Aorta (tissue), 5 donors: ENCODE measurements at regions of chr18 and their contacts with region 1.

Region 1: DNA sequence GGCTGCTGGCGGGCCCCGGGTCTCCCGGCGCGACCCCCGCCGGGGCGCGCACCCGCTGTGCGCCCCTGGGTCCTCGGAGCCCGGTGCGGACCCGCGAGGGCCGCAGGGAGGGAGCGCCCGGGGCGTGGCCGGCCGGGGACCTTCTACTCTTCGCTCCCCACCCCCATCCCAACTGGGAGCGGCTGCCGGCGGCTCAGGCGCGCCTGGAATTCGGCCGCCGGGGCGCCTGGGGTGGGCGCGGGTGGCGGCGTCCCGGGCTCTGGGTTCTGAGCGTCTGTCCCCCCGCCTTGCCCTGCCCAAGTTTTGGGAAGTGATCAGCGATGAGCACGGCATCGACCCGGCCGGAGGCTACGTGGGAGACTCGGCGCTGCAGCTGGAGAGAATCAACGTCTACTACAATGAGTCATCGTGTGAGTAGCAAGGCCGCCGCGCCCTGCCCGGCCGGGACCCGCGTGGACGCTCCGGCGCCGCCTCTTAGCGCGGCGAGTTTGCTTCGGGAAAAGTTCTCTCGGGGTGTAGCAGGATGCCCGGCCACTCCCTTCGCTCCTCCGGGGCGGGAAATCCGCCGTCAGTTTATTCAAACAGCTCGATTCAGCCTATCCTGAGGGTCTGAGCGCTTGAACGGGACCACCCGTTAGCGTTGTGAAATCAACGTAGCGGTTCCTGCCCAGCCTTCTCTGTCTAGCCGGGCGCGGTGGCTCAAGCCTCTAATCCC is 502 bp downstream of the TUBB6 start:
- DNase-seq: peak; percentile 93 to 96
- ATAC-seq: peak; percentile 91
- H3K4me3 ChIP-seq: peak overlapping the region; percentile 78 to 91
- H3K27ac ChIP-seq: peak overlapping the region; percentile 95 to 100
- H3K4me1 ChIP-seq: peaks cover 0 to 8% of the 10 kb centered on the region in 2 donors
- H3K27me3 ChIP-seq: no peaks in the 10 kb centered on the region

Region 2: GRCh38 chr18:12162786-12163185 is 145.8 kb before region 1 on chr18:
- intact Hi-C with region 1: no loop called
- DNase-seq: no peak
- ATAC-seq: no peak
- H3K4me3 ChIP-seq: no peak overlapping the region
- H3K27ac ChIP-seq: no peak overlapping the region
- H3K4me1 ChIP-seq: no peaks in the 10 kb centered on the region
- H3K27me3 ChIP-seq: no peaks in the 10 kb centered on the region

Region 3: GRCh38 chr18:12236934-12237832 is 71.4 kb before region 1 on chr18:
- intact Hi-C with region 1: loop called in 1 of 2 experiments (anchors 5 kb)
- DNase-seq: peak; percentile 86 to 92
- ATAC-seq: peak; percentile 85
- H3K4me3 ChIP-seq: no peak overlapping the region
- H3K27ac ChIP-seq: no peak overlapping the region
- H3K4me1 ChIP-seq: peaks cover 0 to 2% of the 10 kb centered on the region in 2 donors
- H3K27me3 ChIP-seq: no peaks in the 10 kb centered on the region

Region 4: DNA sequence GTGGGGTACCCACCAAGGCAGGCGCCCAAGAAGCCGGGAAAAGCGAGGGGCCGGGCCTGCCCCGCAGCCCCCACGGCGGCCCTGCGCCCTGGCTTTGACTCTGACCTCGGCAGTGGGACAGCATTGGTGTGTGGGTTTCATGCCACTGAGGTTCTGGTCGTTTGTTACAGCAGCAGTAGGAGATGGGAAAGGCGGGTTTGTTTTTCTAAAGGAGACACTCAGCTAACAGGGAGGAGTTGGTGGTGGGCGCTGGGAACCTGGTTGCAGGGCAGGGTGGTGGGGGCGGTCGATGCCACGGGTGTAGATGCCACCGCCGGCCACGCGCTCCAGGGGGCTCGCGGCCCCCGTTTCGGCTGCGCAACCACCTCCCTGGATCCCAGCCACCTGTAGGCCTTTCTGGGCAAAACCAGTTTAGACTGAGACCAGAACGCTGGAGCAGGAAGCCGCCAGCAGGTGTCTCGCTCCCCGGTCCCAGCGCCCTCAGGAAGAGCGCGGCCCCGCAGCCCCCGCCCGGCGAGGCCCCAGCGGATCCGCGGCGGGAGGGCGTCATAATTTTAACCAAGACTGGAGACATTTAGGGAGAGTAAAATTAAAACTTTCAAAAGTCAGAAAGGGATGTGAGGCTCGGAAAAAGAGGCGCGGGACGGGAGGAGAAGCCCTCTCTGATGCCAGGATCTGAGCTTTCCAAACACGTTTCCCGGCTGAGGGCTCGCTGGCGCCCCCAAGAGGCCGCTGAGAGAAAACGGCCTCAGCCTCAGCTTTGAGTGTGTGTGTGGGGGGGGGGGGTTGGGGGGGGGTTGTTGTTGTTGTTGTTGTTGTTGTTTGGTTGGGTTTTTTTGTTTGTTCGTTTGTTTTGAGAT is 36.9 kb before region 1 on chr18:
- intact Hi-C with region 1: loop called in 1 of 2 experiments (anchors 5 kb)
- DNase-seq: peak; percentile 78 to 93
- ATAC-seq: peak; percentile 91
- H3K4me3 ChIP-seq: peak overlapping the region in 1 of 2 donors; percentile 14
- H3K27ac ChIP-seq: peak overlapping the region in 1 of 2 donors; percentile 13
- H3K4me1 ChIP-seq: no peaks in the 10 kb centered on the region
- H3K27me3 ChIP-seq: no peaks in the 10 kb centered on the region

Region 5: DNA sequence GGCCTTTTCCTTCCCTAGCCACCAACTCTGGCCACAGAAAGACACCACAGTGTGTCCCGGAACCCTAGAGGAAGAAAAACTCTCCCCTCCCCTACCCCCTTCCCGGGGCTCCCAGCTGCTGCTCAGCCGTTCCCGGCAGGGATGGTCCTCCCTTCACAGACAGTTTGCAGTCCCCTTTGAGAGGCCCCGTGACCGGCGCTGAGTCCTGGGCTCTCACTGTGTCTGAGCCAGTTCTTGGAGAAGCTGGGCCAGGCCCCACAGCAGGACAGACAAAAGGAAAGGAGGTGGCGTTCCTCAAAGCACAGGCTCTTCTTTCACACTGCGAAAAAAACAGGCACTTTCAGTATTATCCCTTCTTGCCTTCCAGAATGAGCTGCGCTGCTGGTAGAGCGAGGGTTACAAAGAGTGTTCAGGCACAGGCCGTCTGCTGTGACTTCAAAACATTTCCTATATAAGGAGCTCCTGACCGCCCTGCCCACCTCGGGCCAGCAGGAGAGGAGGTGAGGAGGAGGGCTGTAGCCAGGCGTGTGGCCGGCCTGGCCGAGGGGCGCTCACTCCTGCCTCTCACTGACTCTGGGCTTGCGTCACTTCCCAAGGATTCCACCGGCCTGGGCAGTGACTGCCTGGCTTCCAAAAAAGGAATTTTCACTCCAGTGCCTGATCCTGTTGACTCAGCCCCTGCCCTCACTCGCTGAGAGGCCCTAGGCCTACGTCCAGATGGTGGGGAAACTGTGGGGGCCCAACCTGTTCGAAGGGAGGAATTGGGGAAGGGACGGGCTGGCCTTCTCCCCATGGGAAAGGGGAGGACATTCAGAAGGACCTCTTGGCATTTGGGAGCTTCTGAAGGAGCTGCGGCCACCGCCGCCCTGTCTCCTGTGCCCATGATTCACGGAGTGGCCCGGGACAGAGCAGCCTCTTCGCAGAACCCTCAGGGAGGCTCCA is 29.5 kb before region 1 on chr18:
- intact Hi-C with region 1: loop called (anchors 1 to 5 kb)
- DNase-seq: peak; percentile 93 to 96
- ATAC-seq: peak; percentile 95
- H3K4me3 ChIP-seq: peak overlapping the region; percentile 34 to 36
- H3K27ac ChIP-seq: peak overlapping the region; percentile 72 to 99
- H3K4me1 ChIP-seq: peaks cover 0 to 2% of the 10 kb centered on the region in 2 donors
- H3K27me3 ChIP-seq: no peaks in the 10 kb centered on the region

Region 6: GRCh38 chr18:12376718-12377555 is 68.4 kb after region 1 on chr18 and contains the start of gene AFG3L2:
- intact Hi-C with region 1: loop called in 1 of 2 experiments (anchors 5 kb)
- DNase-seq: peak; percentile 100
- ATAC-seq: peak; percentile 98
- H3K4me3 ChIP-seq: peak within 1 kb of the TSS; percentile 55 to 64
- H3K27ac ChIP-seq: peak within 1 kb of the TSS; percentile 76 to 94
- H3K4me1 ChIP-seq: no peaks in the 10 kb centered on the region
- H3K27me3 ChIP-seq: no peaks in the 10 kb centered on the region
- total RNA-seq, gene AFG3L2: 26.0 to 31.6 TPM

Region 7: DNA sequence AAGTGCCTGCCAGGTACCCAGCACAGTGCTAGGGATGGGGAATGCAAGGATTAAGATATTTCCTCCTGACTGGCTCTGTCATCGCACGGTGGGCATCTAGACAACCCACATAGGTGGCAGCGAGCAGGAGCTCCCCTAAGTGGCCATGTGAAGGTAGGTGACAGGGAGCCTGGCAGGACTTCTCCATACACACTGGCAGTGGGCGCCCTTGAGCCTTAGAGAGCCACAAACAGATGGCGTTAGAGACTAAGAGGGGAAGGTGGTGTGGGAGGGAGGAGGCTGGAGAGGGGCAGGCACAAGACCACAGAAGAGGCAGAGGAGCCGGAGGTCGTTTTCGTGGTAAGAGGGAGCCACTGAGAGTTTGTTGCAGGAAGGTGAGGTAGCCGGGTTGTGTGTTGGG is 114.4 kb after region 1 on chr18:
- intact Hi-C with region 1: no loop called
- DNase-seq: no peak
- ATAC-seq: no peak
- H3K4me3 ChIP-seq: no peak overlapping the region
- H3K27ac ChIP-seq: no peak overlapping the region
- H3K4me1 ChIP-seq: no peaks in the 10 kb centered on the region
- H3K27me3 ChIP-seq: no peaks in the 10 kb centered on the region